Lower lobe of right lung (tissue), 2 donors: ENCODE measurements at regions of chr15 and their contacts with region 1.

Region 1: GRCh38 chr15:69403594-69403993 is 10.6 kb upstream of the KIF23 start:
- DNase-seq: no peak
- ATAC-seq: no peak
- H3K4me3 ChIP-seq: no peak overlapping the region
- H3K27ac ChIP-seq: no peak overlapping the region
- H3K4me1 ChIP-seq: no peaks in the 10 kb centered on the region
- H3K27me3 ChIP-seq: no peaks in the 10 kb centered on the region
- CTCF ChIP-seq: no peak

Region 2: GRCh38 chr15:69058830-69059556 is 344.6 kb before region 1 on chr15:
- intact Hi-C with region 1: loop called (anchors 10 kb)
- DNase-seq: peak; percentile 87
- ATAC-seq: peak; percentile 87 to 89
- H3K4me3 ChIP-seq: no peak overlapping the region
- H3K27ac ChIP-seq: no peak overlapping the region
- H3K4me1 ChIP-seq: peaks cover 7% of the 10 kb centered on the region
- H3K27me3 ChIP-seq: no peaks in the 10 kb centered on the region
- CTCF ChIP-seq: peak; percentile 90

Region 3: GRCh38 chr15:69311319-69311721 is 92.3 kb before region 1 on chr15:
- intact Hi-C with region 1: no loop called
- DNase-seq: no peak
- ATAC-seq: no peak
- H3K4me3 ChIP-seq: no peak overlapping the region
- H3K27ac ChIP-seq: no peak overlapping the region
- H3K4me1 ChIP-seq: peaks cover 6% of the 10 kb centered on the region
- H3K27me3 ChIP-seq: no peaks in the 10 kb centered on the region
- CTCF ChIP-seq: no peak